Activated T-helper 1 cell treated with anti-CD3 and anti-CD28 coated beads, Interleukin-12 subunit alpha, Interleukin-12 subunit beta, Interleukin-2, Interleukin-4 antibody, amounts not matched to agents 30 ng/mL and 10 ng/mL and 1 ng/mL, durations not matched to agents 14 hours and 24 hours and 36 hours (primary cell): ENCODE measurements at regions of chr9 and their contacts with region 1.

Region 1: GRCh38 chr9:73149371-73150067 is 2.1 kb upstream of the ANXA1 start:
- DNase-seq: no peak
- H3K4me3 Mint-ChIP-seq: peak overlapping the region; percentile 68
- H3K27ac Mint-ChIP-seq: peak overlapping the region; percentile 95
- H3K4me1 Mint-ChIP-seq: peaks cover 77% of the 10 kb centered on the region
- H3K27me3 Mint-ChIP-seq: no peaks in the 10 kb centered on the region

Region 2: GRCh38 chr9:71768388-71769174 is 1380.9 kb before region 1 on chr9 and contains the start of gene CEMIP2:
- intact Hi-C with region 1: loop called (anchors 10 kb)
- DNase-seq: peak; percentile 84
- H3K4me3 Mint-ChIP-seq: peak within 1 kb of the TSS; percentile 96
- H3K27ac Mint-ChIP-seq: peak within 1 kb of the TSS; percentile 92
- H3K4me1 Mint-ChIP-seq: peaks cover 48% of the 10 kb centered on the region
- H3K27me3 Mint-ChIP-seq: no peaks in the 10 kb centered on the region
- total RNA-seq, gene CEMIP2: 70.0 and 79.1 TPM in 2 replicates

Region 3: DNA sequence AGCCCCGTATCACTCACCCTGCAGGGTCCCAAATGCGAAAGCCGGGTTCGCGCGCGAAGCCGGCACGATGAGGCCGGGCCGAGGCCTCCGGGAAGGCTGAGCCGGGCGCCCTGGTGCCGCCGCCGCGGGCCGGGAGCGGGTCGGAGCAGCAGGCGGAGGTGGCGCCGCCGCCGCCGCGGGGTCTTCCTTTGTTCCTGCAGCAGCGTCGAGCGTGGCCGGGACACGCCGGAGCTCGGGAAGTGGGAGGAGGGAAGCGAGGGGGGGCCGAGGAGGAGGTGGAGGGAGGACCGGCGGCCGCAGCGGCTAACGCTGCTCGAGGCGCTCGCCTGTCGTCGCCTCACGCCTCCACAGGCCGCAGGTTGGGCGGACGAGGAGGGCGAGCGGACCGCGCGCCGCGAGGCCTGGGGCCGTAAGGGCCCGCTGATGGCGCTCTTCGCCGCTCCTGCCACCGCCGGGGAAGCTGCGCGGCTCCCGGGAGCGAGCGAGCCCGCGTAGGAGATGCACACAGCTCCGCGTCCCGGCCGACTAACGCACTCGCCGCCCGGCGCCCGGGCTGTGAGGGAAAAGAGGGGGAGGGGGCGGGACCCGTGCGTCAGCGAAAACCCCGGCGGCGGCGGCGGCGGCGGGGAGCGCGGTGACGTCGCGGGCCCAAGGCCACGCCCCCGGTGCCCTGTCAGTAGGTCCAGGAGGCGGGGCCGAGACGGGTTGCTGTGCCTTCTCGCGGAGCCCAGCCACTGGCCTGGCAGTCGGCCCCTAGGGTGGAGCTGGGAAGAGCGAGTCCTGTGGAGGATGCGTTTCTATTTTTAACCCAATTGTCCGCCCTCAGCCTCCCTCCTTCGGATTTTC is 784.6 kb before region 1 on chr9 and contains the start of gene ZFAND5:
- intact Hi-C with region 1: loop called (anchors 5 kb)
- DNase-seq: peak; percentile 89
- H3K4me3 Mint-ChIP-seq: peak within 1 kb of the TSS; percentile 97
- H3K27ac Mint-ChIP-seq: peak within 1 kb of the TSS; percentile 97
- H3K4me1 Mint-ChIP-seq: peaks cover 42% of the 10 kb centered on the region
- H3K27me3 Mint-ChIP-seq: no peaks in the 10 kb centered on the region
- total RNA-seq, gene ZFAND5: 131 and 133 TPM in 2 replicates

Region 4: GRCh38 chr9:73104342-73104741 is 45.2 kb before region 1 on chr9:
- intact Hi-C with region 1: loop called (anchors 2 kb)
- DNase-seq: no peak
- H3K4me3 Mint-ChIP-seq: no peak overlapping the region
- H3K27ac Mint-ChIP-seq: no peak overlapping the region
- H3K4me1 Mint-ChIP-seq: no peaks in the 10 kb centered on the region
- H3K27me3 Mint-ChIP-seq: peaks cover 19% of the 10 kb centered on the region

Region 5: DNA sequence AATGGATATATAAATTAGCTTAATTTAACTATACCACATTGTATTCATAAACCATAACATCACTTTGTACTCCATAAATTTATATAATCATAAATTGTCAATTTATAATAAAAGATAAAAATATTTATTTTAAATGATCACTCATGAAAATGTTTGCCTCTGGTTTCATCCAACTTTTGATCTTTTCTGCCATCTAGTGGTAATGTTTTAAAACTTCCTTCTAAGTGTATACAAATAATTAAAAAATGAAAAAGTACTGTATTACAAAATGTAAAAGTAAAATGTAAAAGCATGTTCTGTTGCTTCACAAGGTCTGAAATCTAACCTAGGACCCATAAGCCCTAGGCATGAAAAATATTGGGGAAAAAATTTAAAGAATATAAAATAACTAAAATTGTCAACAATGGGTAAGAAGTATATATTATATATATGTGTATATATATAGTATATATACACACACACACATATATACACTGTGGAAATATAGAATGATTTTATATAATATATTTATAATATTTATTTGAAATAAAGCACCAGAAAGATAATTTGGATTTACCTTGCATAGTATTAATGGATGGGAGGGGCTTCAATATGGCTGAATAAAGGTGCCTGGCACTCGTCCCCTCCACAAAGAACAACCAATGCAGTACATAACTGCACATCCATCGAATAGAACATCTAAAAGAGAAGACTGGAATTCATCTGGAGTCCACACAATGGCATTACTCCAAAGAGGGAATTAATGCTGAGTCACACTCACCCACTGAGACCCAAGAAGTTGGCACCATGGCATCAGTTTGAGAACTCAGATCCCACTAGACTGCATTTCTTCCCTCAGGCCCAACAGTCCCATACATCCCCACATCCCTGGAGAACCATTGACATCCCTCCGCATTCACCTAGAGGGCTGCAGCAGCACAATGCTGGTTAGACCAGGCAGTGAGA is 34.7 kb after region 1 on chr9:
- intact Hi-C with region 1: loop called (anchors 1 kb)
- DNase-seq: no peak
- H3K4me3 Mint-ChIP-seq: no peak overlapping the region
- H3K27ac Mint-ChIP-seq: no peak overlapping the region
- H3K4me1 Mint-ChIP-seq: peaks cover 13% of the 10 kb centered on the region
- H3K27me3 Mint-ChIP-seq: peaks cover 25% of the 10 kb centered on the region

Region 6: GRCh38 chr9:73344060-73344459 is 194.5 kb after region 1 on chr9:
- intact Hi-C with region 1: no loop called
- DNase-seq: no peak
- H3K4me3 Mint-ChIP-seq: no peak overlapping the region
- H3K27ac Mint-ChIP-seq: no peak overlapping the region
- H3K4me1 Mint-ChIP-seq: no peaks in the 10 kb centered on the region
- H3K27me3 Mint-ChIP-seq: no peaks in the 10 kb centered on the region

Region 7: GRCh38 chr9:75027187-75028107 is 1877.9 kb after region 1 on chr9:
- intact Hi-C with region 1: loop called (anchors 10 kb)
- DNase-seq: no peak
- H3K4me3 Mint-ChIP-seq: peak overlapping the region; percentile 97
- H3K27ac Mint-ChIP-seq: peak overlapping the region; percentile 98
- H3K4me1 Mint-ChIP-seq: peaks cover 47% of the 10 kb centered on the region
- H3K27me3 Mint-ChIP-seq: peaks cover 2% of the 10 kb centered on the region